ENCODE measurements at regions of chr16 and their contacts with region 1.

Region 1: GRCh38 chr16:84277237-84277823 is 17.3 kb upstream of the WFDC1 start:
- DNase-seq: peak; percentile 83
- ATAC-seq: peak; percentile 79
- H3K4me3 Mint-ChIP-seq: no peak overlapping the region
- H3K27ac Mint-ChIP-seq: no peak overlapping the region
- H3K4me1 Mint-ChIP-seq: peaks cover 10% of the 10 kb centered on the region
- H3K27me3 Mint-ChIP-seq: no peaks in the 10 kb centered on the region; the same call in 1 of the 2 replicates
- CTCF ChIP-seq: peak; percentile 93

Region 2: GRCh38 chr16:84299734-84300334 is 22.5 kb after region 1 on chr16:
- CTCF ChIA-PET with region 1: interaction called, 17 read pairs
- POLR2A ChIA-PET with region 1: no interaction called
- DNase-seq: peak; percentile 48
- ATAC-seq: peak; percentile 80
- H3K4me3 Mint-ChIP-seq: no peak overlapping the region
- H3K27ac Mint-ChIP-seq: no peak overlapping the region; the same call in 1 of the 2 replicates
- H3K4me1 Mint-ChIP-seq: peaks cover 51% of the 10 kb centered on the region
- H3K27me3 Mint-ChIP-seq: peaks cover 8% of the 10 kb centered on the region
- CTCF ChIP-seq: no peak

Region 3: GRCh38 chr16:84368308-84368996 is 91.1 kb after region 1 on chr16 and contains the start of gene ATP2C2:
- CTCF ChIA-PET with region 1: interaction called, 13 read pairs
- POLR2A ChIA-PET with region 1: interaction called, 3 read pairs
- DNase-seq: peak; percentile 89
- ATAC-seq: peak; percentile 93
- H3K4me3 Mint-ChIP-seq: peak within 1 kb of the TSS; percentile 86
- H3K27ac Mint-ChIP-seq: no peak within 1 kb of the TSS
- H3K4me1 Mint-ChIP-seq: peaks cover 32% of the 10 kb centered on the region
- H3K27me3 Mint-ChIP-seq: peaks cover 32% of the 10 kb centered on the region
- CTCF ChIP-seq: no peak
- total RNA-seq, gene ATP2C2: 2.4 to 4.3 TPM (median 2.8 TPM) in 3 replicates

Measured in WTC11 (cell line).